CD4-positive, alpha-beta memory T cell (primary cell): ENCODE measurements at regions of chr13 and their contacts with region 1.

Region 1: DNA sequence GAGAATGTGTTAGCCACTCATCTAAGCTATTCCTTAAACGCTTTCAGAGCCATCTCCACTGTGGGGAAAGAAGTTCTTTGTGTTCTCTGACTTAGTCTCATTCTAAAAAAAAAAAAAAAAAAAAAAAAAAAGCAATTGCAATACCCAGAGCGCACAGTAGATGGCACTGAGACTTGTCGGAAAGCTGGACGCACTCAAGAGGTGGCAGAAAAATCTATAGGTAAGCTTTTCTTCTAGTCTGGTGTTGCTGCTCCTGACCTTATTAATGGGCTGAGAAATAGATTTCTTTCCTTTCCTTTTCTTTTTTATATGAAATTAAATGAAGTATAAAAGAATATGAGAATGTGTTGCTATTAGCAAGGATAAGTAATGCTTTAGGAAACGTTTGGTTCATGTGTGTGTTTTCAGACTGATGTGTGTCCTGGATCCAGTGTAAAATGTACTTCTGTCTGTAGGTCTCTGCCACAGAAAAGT is 4.7 kb upstream of the GJB2 start:
- DNase-seq: peak in 4 of 5 donors; percentile 42 to 52 (median 49)
- H3K4me3 ChIP-seq: no peak overlapping the region
- H3K4me3 Mint-ChIP-seq: no peak overlapping the region
- H3K27ac ChIP-seq: no peak overlapping the region
- H3K27ac Mint-ChIP-seq: peak overlapping the region in 1 of 7 donors; percentile 2
- H3K4me1 ChIP-seq: peaks cover 22% of the 10 kb centered on the region
- H3K4me1 Mint-ChIP-seq: peaks cover 14 to 21% (median 16%) of the 10 kb centered on the region in 4 donors
- H3K27me3 ChIP-seq: peaks cover 41% of the 10 kb centered on the region
- H3K27me3 Mint-ChIP-seq: peaks cover 34 to 36% of the 10 kb centered on the region in 2 donors

Region 2: DNA sequence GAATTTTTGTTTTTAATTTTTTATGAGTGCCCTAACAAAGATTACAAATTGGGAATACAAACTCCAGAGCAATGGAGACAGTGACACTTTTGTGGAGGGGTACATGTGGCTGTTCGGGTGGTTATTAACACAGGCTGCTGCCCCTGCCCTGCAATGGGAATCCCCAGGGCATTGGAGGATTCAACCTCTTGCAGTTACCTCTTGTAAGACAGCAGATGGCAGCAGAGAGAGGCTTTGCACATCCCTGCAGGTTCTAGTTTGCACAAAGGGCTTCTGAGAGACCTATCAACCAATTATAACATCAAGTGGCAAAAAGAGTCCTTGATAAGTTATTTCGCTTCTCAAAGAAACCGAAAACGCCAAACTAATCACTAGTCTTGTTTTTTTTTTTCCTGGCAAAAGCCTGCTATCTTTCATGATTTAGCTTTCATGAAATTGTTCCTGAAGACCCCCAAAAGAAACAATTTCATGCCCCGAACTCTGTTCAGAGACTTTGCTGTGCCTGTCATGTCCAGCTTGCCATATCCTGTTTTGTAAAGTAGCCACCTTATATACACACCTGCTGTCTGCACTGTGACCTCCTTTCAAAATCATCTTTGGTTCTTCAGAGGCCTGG is 15.1 kb before region 1 on chr13:
- CTCF ChIA-PET with region 1: interaction called, 53 read pairs
- POLR2A ChIA-PET with region 1: no interaction called
- intact Hi-C with region 1: no loop called
- DNase-seq: peak in 4 of 5 donors; percentile 63 to 73 (median 68)
- H3K4me3 ChIP-seq: no peak overlapping the region
- H3K4me3 Mint-ChIP-seq: no peak overlapping the region
- H3K27ac ChIP-seq: no peak overlapping the region
- H3K27ac Mint-ChIP-seq: no peak overlapping the region
- H3K4me1 ChIP-seq: no peaks in the 10 kb centered on the region
- H3K4me1 Mint-ChIP-seq: peaks cover 0 to 2% (median 0%) of the 10 kb centered on the region in 4 donors
- H3K27me3 ChIP-seq: peaks cover 7% of the 10 kb centered on the region
- H3K27me3 Mint-ChIP-seq: peaks cover 25 to 34% of the 10 kb centered on the region in 2 donors

Region 3: GRCh38 chr13:20231839-20232555 is 34.6 kb after region 1 on chr13 and contains the start of gene GJB6:
- CTCF ChIA-PET with region 1: interaction called, 7 read pairs
- POLR2A ChIA-PET with region 1: no interaction called
- intact Hi-C with region 1: loop called (anchors 2 kb)
- DNase-seq: peak in 4 of 5 donors; percentile 15 to 26 (median 20)
- H3K4me3 ChIP-seq: peak within 1 kb of the TSS; percentile 36 to 50
- H3K4me3 Mint-ChIP-seq: peak within 1 kb of the TSS; percentile 85 to 94 (median 89)
- H3K27ac ChIP-seq: no peak within 1 kb of the TSS
- H3K27ac Mint-ChIP-seq: peak within 1 kb of the TSS; percentile 18 to 84 (median 57)
- H3K4me1 ChIP-seq: peaks cover 14% of the 10 kb centered on the region
- H3K4me1 Mint-ChIP-seq: peaks cover 3 to 16% (median 6%) of the 10 kb centered on the region in 4 donors
- H3K27me3 ChIP-seq: peaks cover 11% of the 10 kb centered on the region
- H3K27me3 Mint-ChIP-seq: peaks cover 23 to 43% of the 10 kb centered on the region in 2 donors
- total RNA-seq, gene GJB6: 0.69 TPM in 1 of 2 experiments, not detected in the other

Region 4: GRCh38 chr13:20703780-20704445 is 506.5 kb after region 1 on chr13:
- CTCF ChIA-PET with region 1: interaction called, 3 read pairs
- POLR2A ChIA-PET with region 1: no interaction called
- intact Hi-C with region 1: loop called (anchors 5 kb)
- DNase-seq: peak; percentile 78 to 83 (median 81)
- H3K4me3 ChIP-seq: no peak overlapping the region
- H3K4me3 Mint-ChIP-seq: no peak overlapping the region
- H3K27ac ChIP-seq: no peak overlapping the region
- H3K27ac Mint-ChIP-seq: no peak overlapping the region
- H3K4me1 ChIP-seq: peaks cover 7% of the 10 kb centered on the region
- H3K4me1 Mint-ChIP-seq: peaks cover 3 to 14% (median 8%) of the 10 kb centered on the region in 4 donors
- H3K27me3 ChIP-seq: peaks cover 30% of the 10 kb centered on the region
- H3K27me3 Mint-ChIP-seq: peaks cover 11 to 22% of the 10 kb centered on the region in 2 donors